ENCODE measurements at regions of chr14 and their contacts with region 1.

Region 1: GRCh38 chr14:66359500-66359899 is 126.7 kb upstream of the CCDC196 start:
- DNase-seq: peak; percentile 64
- ATAC-seq: peak; percentile 46; the same call in 1 of the 2 replicates
- H3K4me3 ChIP-seq: no peak overlapping the region
- H3K27ac ChIP-seq: no peak overlapping the region
- H3K4me1 ChIP-seq: no peaks in the 10 kb centered on the region
- H3K27me3 ChIP-seq: 0 out of 2 replicates have a peak, but pooled peaks cover 5% of the 10 kb centered on the region
- CTCF ChIP-seq: peak; percentile 34 to 77 (median 54); a peak in 4 of 6 replicates
- POLR2A ChIP-seq: no peak
- RAD21 ChIP-seq: peak; percentile 78

Region 2: DNA sequence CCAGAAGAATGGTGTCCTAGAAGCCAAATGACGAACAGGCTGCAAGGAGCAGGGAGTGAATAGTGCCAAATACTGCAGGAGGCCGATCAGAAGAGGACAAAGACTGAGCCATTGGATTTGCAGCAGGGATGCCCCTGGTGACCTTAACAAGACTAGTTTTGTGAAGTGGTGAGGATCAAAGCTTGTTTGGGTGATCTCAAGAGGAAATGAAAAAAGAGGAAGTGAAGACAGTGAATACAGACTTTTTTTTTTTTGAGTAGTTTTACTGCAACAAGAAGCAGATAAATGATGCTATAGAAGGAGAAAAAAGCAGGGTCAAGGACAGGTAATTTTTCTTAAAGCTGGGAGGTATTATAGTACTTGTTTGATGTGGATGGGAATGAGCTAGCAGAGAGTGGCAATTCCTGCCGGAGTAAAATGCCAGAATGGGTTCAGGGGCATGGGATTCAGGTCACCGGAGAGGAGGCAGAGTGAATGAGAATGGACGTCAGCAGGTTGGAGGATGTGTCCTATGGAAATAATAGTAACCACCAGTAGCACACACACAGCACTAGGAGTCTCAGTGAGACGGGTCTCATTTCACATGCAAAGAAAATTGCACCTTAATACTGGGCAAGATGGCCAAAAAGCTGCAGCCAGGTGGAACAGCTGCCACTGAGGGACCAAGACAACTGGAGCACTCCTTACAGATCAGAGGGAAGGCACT is 219.1 kb before region 1 on chr14:
- CTCF ChIA-PET with region 1: no interaction called
- POLR2A ChIA-PET with region 1: no interaction called
- RAD21 ChIA-PET with region 1: no interaction called
- intact Hi-C with region 1: no loop called
- DNase-seq: no peak
- ATAC-seq: no peak
- H3K4me3 ChIP-seq: no peak overlapping the region
- H3K27ac ChIP-seq: no peak overlapping the region
- H3K4me1 ChIP-seq: no peaks in the 10 kb centered on the region
- H3K27me3 ChIP-seq: no peaks in the 10 kb centered on the region; the same call in 1 of the 2 replicates
- CTCF ChIP-seq: no peak
- POLR2A ChIP-seq: no peak
- RAD21 ChIP-seq: no peak

Region 3: DNA sequence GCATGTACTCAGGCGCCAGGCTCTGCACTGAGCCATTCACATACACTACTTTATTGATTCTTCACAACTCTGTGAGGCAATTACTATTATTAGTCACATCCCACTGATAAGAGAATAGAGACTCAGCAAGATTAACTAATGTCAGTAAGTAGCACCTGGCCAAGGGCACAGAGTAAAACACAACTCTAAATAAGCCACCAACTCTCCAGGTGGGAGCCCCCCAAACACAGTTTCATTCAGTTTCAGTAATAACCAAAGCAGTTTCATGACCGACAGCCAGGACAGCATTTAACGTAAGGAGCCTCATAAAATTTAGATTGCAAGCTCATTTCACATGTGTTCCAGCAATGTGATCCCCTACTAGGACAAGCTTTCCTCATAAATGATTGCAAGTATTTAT is 196.5 kb before region 1 on chr14:
- CTCF ChIA-PET with region 1: no interaction called
- POLR2A ChIA-PET with region 1: no interaction called
- RAD21 ChIA-PET with region 1: no interaction called
- intact Hi-C with region 1: no loop called
- DNase-seq: no peak
- ATAC-seq: no peak
- H3K4me3 ChIP-seq: no peak overlapping the region
- H3K27ac ChIP-seq: no peak overlapping the region
- H3K4me1 ChIP-seq: no peaks in the 10 kb centered on the region
- H3K27me3 ChIP-seq: 0 out of 2 replicates have a peak, but pooled peaks cover 8% of the 10 kb centered on the region
- CTCF ChIP-seq: no peak
- POLR2A ChIP-seq: no peak
- RAD21 ChIP-seq: no peak

Region 4: DNA sequence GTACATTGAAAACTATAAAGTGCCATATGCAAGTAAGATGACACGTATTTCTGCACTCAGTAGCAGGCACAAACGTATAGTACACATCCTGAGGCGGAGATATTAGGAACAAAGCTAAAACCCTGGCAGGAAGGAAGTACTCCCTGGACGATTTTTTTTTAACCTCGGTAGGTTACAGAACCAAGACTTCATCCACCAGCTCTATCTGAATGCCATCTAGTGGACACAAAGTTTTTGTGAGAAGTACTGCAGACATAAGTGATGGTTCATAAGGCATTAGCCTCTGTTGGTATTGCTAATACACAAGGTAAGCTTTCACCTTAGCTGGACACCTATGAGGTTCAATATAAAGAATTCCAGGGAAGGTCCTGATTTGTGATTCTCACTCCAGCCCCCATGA is 43.7 kb after region 1 on chr14:
- CTCF ChIA-PET with region 1: interaction called, 45 read pairs
- POLR2A ChIA-PET with region 1: no interaction called
- RAD21 ChIA-PET with region 1: interaction called, 3 to 4 read pairs
- intact Hi-C with region 1: no loop called
- DNase-seq: no peak
- ATAC-seq: peak; percentile 78
- H3K4me3 ChIP-seq: no peak overlapping the region
- H3K27ac ChIP-seq: no peak overlapping the region
- H3K4me1 ChIP-seq: no peaks in the 10 kb centered on the region
- H3K27me3 ChIP-seq: no peaks in the 10 kb centered on the region
- CTCF ChIP-seq: peak; percentile 41 to 52 (median 52); a peak in 4 of 6 replicates
- POLR2A ChIP-seq: no peak
- RAD21 ChIP-seq: peak; percentile 50

Region 5: GRCh38 chr14:66624299-66624937 is 264.9 kb after region 1 on chr14:
- CTCF ChIA-PET with region 1: interaction called, 10 read pairs
- POLR2A ChIA-PET with region 1: no interaction called
- RAD21 ChIA-PET with region 1: interaction called in 1 of 2 experiments, 4 read pairs
- intact Hi-C with region 1: no loop called
- DNase-seq: peak; percentile 48
- ATAC-seq: peak; percentile 98
- H3K4me3 ChIP-seq: no peak overlapping the region
- H3K27ac ChIP-seq: no peak overlapping the region
- H3K4me1 ChIP-seq: no peaks in the 10 kb centered on the region
- H3K27me3 ChIP-seq: no peaks in the 10 kb centered on the region
- CTCF ChIP-seq: peak; percentile 65 to 74 (median 67)
- POLR2A ChIP-seq: no peak
- RAD21 ChIP-seq: peak; percentile 80

Region 6: DNA sequence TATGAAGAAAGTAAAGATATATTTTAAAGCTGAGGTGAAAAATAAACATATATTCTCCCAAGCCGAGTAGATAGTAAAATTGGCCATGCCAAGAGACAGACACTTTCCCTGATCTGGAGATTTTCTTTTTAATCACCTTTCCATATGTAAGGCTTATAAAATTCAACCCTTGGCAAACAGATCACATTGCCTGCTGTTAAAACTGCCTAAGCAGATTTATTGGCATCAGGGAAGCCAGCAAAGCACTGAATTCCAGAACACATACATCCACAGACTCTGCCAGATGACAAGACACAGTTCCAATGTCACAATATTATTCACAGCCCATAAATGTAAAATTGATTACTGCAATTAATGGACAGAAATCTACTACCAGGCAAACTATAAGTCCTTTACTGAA is 751.5 kb after region 1 on chr14:
- CTCF ChIA-PET with region 1: no interaction called
- POLR2A ChIA-PET with region 1: no interaction called
- RAD21 ChIA-PET with region 1: interaction called in 1 of 2 experiments, 4 read pairs
- intact Hi-C with region 1: loop called (anchors 5 kb)
- DNase-seq: no peak
- ATAC-seq: no peak
- H3K4me3 ChIP-seq: no peak overlapping the region
- H3K27ac ChIP-seq: no peak overlapping the region
- H3K4me1 ChIP-seq: no peaks in the 10 kb centered on the region
- H3K27me3 ChIP-seq: no peaks in the 10 kb centered on the region
- CTCF ChIP-seq: no peak
- POLR2A ChIP-seq: no peak
- RAD21 ChIP-seq: no peak

Measured in HCT116 (cell line).